MCF 10A (cell line): ENCODE measurements at regions of chr9 and their contacts with region 1.

Region 1: GRCh38 chr9:109440797-109441287 is 57.3 kb downstream of the PTPN3 start:
- DNase-seq: peak; percentile 85
- H3K4me3 Mint-ChIP-seq: no peak overlapping the region
- H3K27ac Mint-ChIP-seq: peak overlapping the region; percentile 75
- H3K4me1 Mint-ChIP-seq: peaks cover 10% of the 10 kb centered on the region
- H3K27me3 Mint-ChIP-seq: no peaks in the 10 kb centered on the region
- CTCF ChIP-seq: peak; percentile 68

Region 2: DNA sequence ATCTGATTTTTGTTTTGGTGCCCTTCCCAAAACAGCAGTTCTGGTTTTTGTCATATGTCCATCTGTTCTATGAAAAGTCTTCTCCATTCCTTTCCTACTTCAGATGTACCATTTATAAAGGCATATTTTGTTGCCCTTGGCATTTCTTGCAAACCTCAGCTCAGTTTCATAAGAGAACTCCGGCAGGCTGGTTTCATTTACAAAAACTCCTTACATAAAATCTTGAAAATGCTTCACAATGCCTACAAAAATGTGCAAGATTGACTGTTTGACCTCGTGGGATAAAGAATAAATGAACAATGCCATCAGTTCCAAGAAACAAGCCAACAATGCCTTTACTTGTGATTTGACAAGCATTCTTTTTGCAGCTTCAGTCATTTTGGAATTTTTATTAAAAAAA is 388.4 kb before region 1 on chr9:
- CTCF ChIA-PET with region 1: no interaction called
- POLR2A ChIA-PET with region 1: no interaction called
- intact Hi-C with region 1: no loop called
- DNase-seq: no peak
- H3K4me3 Mint-ChIP-seq: no peak overlapping the region
- H3K27ac Mint-ChIP-seq: no peak overlapping the region
- H3K4me1 Mint-ChIP-seq: no peaks in the 10 kb centered on the region
- H3K27me3 Mint-ChIP-seq: no peaks in the 10 kb centered on the region
- CTCF ChIP-seq: no peak

Region 3: GRCh38 chr9:109381011-109381729 is 59.7 kb before region 1 on chr9:
- CTCF ChIA-PET with region 1: no interaction called
- POLR2A ChIA-PET with region 1: no interaction called
- intact Hi-C with region 1: no loop called
- DNase-seq: no peak
- H3K4me3 Mint-ChIP-seq: no peak overlapping the region
- H3K27ac Mint-ChIP-seq: no peak overlapping the region
- H3K4me1 Mint-ChIP-seq: no peaks in the 10 kb centered on the region
- H3K27me3 Mint-ChIP-seq: no peaks in the 10 kb centered on the region
- CTCF ChIP-seq: no peak

Region 4: GRCh38 chr9:109453210-109453842 is 12.5 kb after region 1 on chr9:
- CTCF ChIA-PET with region 1: interaction called, 133 read pairs
- POLR2A ChIA-PET with region 1: interaction called, 80 read pairs
- intact Hi-C with region 1: no loop called
- DNase-seq: peak; percentile 85
- H3K4me3 Mint-ChIP-seq: peak overlapping the region; percentile 15
- H3K27ac Mint-ChIP-seq: peak overlapping the region; percentile 87
- H3K4me1 Mint-ChIP-seq: peaks cover 52% of the 10 kb centered on the region
- H3K27me3 Mint-ChIP-seq: no peaks in the 10 kb centered on the region
- CTCF ChIP-seq: no peak

Region 5: GRCh38 chr9:109469646-109470358 is 29.0 kb after region 1 on chr9:
- CTCF ChIA-PET with region 1: interaction called, 387 read pairs
- POLR2A ChIA-PET with region 1: interaction called, 344 read pairs
- intact Hi-C with region 1: loop called (anchors 1 kb)
- DNase-seq: peak; percentile 88
- H3K4me3 Mint-ChIP-seq: no peak overlapping the region
- H3K27ac Mint-ChIP-seq: peak overlapping the region; percentile 67
- H3K4me1 Mint-ChIP-seq: peaks cover 49% of the 10 kb centered on the region
- H3K27me3 Mint-ChIP-seq: no peaks in the 10 kb centered on the region
- CTCF ChIP-seq: peak; percentile 91

Region 6: DNA sequence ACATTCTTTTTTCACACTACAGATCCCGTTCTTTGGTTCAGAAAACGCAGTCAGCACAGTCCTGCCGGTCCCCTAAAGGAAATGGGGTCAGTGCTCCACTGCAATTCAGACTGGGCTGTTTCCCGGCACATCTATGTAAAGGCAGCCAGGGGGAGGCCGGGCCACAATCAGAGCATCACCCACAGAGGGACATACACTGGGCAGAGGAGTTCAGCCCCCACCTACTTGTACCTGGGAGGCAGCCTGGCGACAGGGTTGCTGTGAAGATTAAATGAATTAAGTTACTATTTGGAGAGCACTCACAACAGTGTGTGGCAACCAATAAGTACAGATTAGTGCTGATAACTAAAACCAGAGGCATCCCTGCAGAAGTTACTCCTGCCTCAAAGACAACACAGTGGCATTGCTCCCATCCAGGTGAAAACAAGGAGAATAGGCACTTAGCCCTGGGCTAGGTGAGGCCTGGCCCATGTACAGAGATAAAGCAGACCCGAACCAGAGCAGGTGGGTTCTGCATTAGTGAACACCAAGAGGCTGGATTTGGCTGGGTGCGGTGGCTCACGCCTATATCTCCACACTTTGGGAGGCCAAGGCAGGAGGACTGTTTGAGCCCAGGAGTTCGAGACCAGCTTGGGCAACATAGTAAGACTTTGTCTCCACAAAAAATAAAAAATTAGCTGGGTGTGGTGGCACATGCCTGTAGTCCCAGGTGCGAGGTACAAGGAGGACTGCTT is 53.0 kb after region 1 on chr9:
- CTCF ChIA-PET with region 1: interaction called, 16 read pairs
- POLR2A ChIA-PET with region 1: interaction called, 11 read pairs
- intact Hi-C with region 1: no loop called
- DNase-seq: no peak
- H3K4me3 Mint-ChIP-seq: no peak overlapping the region
- H3K27ac Mint-ChIP-seq: no peak overlapping the region
- H3K4me1 Mint-ChIP-seq: peaks cover 24% of the 10 kb centered on the region
- H3K27me3 Mint-ChIP-seq: peaks cover 4% of the 10 kb centered on the region
- CTCF ChIP-seq: no peak

Region 7: GRCh38 chr9:109513871-109514270 is 73.0 kb after region 1 on chr9:
- CTCF ChIA-PET with region 1: interaction called, 28 read pairs
- POLR2A ChIA-PET with region 1: interaction called, 9 read pairs
- intact Hi-C with region 1: no loop called
- DNase-seq: no peak
- H3K4me3 Mint-ChIP-seq: no peak overlapping the region
- H3K27ac Mint-ChIP-seq: no peak overlapping the region
- H3K4me1 Mint-ChIP-seq: no peaks in the 10 kb centered on the region
- H3K27me3 Mint-ChIP-seq: no peaks in the 10 kb centered on the region
- CTCF ChIP-seq: no peak

Region 8: GRCh38 chr9:109817846-109818472 is 377.1 kb after region 1 on chr9:
- CTCF ChIA-PET with region 1: interaction called, 4 read pairs
- POLR2A ChIA-PET with region 1: no interaction called
- intact Hi-C with region 1: loop called (anchors 5 kb)
- DNase-seq: peak; percentile 91
- H3K4me3 Mint-ChIP-seq: no peak overlapping the region
- H3K27ac Mint-ChIP-seq: no peak overlapping the region
- H3K4me1 Mint-ChIP-seq: no peaks in the 10 kb centered on the region
- H3K27me3 Mint-ChIP-seq: no peaks in the 10 kb centered on the region
- CTCF ChIP-seq: peak; percentile 84